Psoas muscle (tissue), 8 donors: ENCODE measurements at regions of chr20 and their contacts with region 1.

Region 1: DNA sequence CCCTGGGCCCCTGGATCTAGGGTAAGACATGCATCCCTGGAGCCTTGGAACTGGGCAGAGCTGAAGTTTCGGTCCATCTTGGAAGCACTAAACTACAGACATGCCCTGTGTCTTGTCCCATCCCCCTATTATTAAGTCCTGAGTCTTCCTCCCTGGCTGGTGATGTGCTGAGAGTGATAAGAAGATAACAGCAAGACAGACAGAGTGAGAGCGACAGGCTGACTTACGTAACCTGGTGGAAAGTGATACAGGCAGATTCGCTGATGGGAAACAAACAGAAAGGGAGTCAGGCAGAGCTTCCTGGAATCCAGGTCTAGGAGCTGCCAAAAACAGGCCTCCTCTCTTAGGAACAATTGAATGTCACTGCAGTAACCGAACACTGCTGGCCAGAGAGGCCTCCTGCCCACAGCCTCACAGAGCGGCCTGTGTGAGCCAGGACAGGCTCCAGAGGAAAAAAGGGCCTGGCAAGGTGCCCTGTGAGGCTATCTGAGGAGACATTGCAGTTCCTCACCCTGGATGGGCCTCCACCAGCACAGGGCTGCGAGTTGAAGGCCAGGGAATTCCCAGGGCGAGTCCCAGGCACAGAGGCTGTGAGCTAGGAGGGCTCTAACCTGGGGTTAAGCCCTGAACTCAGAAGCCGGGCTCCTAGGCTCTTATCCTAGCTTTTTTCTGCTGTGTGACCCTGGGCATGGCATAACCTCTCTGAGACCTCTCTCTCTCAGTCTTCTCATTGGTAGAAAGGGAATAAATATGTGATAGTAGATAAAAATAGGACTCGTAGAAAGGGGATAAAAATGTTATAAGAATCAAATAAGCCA is 34.2 kb upstream of the B4GALT5 start:
- DNase-seq: peak; percentile 95 to 97
- ATAC-seq: peak; percentile 93 to 98 (median 97)
- H3K4me3 ChIP-seq: no peak overlapping the region
- H3K27ac ChIP-seq: peak overlapping the region; percentile 88
- H3K4me1 ChIP-seq: peaks cover 33% of the 10 kb centered on the region
- H3K27me3 ChIP-seq: no peaks in the 10 kb centered on the region
- CTCF ChIP-seq: no peak

Region 2: GRCh38 chr20:49821870-49822331 is 74.0 kb after region 1 on chr20:
- intact Hi-C with region 1: loop called in 1 of 2 experiments (anchors 5 kb)
- DNase-seq: no peak
- ATAC-seq: peak; percentile 72 to 81 (median 76)
- H3K4me3 ChIP-seq: no peak overlapping the region
- H3K27ac ChIP-seq: peak overlapping the region; percentile 89
- H3K4me1 ChIP-seq: peaks cover 55% of the 10 kb centered on the region
- H3K27me3 ChIP-seq: no peaks in the 10 kb centered on the region
- CTCF ChIP-seq: peak; percentile 30